OCI-LY7 (cell line): ENCODE measurements at regions of chr9 and their contacts with region 1.

Region 1: GRCh38 chr9:83334320-83334719 is 203.9 kb downstream of the FRMD3 start:
- DNase-seq: peak; percentile 51
- H3K4me3 ChIP-seq: no peak overlapping the region
- H3K27ac ChIP-seq: no peak overlapping the region
- H3K4me1 ChIP-seq: no peaks in the 10 kb centered on the region
- CTCF ChIP-seq: peak; percentile 95

Region 2: DNA sequence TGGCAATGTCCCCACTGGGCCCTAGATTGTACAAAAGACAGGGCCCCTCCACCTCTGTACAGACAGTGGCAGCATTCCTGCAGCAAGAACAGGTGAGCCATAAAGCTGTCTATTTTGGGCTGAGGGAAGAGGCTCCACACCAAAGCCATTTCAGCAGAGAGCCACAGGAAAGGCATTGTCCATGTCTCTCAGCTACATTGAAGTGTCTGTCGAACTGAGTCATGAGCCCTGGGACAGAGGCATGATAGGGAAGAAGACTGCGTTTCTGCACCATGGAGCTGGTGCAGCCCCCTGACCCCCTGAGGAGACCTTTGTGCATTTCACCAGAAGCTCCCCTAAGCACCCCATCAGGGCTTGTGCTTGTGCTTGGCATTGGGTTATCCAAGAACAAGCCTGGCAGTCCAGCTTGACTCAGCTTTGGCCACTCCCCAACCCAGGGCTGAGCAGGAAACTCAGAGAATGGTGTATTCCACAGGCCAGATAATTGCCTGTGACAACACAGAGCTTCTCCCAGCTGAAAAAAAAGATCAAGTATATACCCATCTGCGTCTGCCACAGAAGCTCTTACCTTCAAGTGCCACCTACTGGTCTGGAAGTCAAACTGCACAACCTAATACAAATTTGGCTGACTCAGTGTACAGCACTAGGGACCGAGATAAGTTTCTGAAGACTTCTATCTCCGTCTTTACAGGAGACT is 209.8 kb after region 1 on chr9:
- CTCF ChIA-PET with region 1: interaction called, 4 read pairs
- POLR2A ChIA-PET with region 1: no interaction called
- intact Hi-C with region 1: loop called (anchors 2 kb)
- DNase-seq: peak; percentile 53
- H3K4me3 ChIP-seq: no peak overlapping the region
- H3K27ac ChIP-seq: no peak overlapping the region
- H3K4me1 ChIP-seq: no peaks in the 10 kb centered on the region
- CTCF ChIP-seq: peak; percentile 86

Region 3: GRCh38 chr9:83596896-83597504 is 262.7 kb after region 1 on chr9:
- CTCF ChIA-PET with region 1: no interaction called
- POLR2A ChIA-PET with region 1: no interaction called
- intact Hi-C with region 1: loop called (anchors 2 kb)
- DNase-seq: peak; percentile 42
- H3K4me3 ChIP-seq: no peak overlapping the region
- H3K27ac ChIP-seq: no peak overlapping the region
- H3K4me1 ChIP-seq: no peaks in the 10 kb centered on the region
- CTCF ChIP-seq: peak; percentile 91

Region 4: GRCh38 chr9:83714329-83714728 is 380.0 kb after region 1 on chr9:
- CTCF ChIA-PET with region 1: no interaction called
- POLR2A ChIA-PET with region 1: no interaction called
- intact Hi-C with region 1: loop called (anchors 5 kb)
- DNase-seq: peak; percentile 62
- H3K4me3 ChIP-seq: no peak overlapping the region
- H3K27ac ChIP-seq: no peak overlapping the region
- H3K4me1 ChIP-seq: peaks cover 10% of the 10 kb centered on the region
- CTCF ChIP-seq: peak; percentile 84